Esophagus squamous epithelium (tissue), 5 donors: ENCODE measurements at regions of chr20 and their contacts with region 1.

Region 1: GRCh38 chr20:58890518-58891085 is 38.1 kb downstream of the GNAS start:
- DNase-seq: no peak
- H3K4me3 ChIP-seq: peak overlapping the region; percentile 83 to 97 (median 88)
- H3K27ac ChIP-seq: peak overlapping the region; percentile 86 to 99 (median 99)
- H3K4me1 ChIP-seq: peaks cover 20 to 42% (median 30%) of the 10 kb centered on the region in 3 donors
- H3K27me3 ChIP-seq: no peaks in the 10 kb centered on the region
- CTCF ChIP-seq: no peak
- POLR2A ChIP-seq: peak in 2 of 4 donors; percentile 39 to 50

Region 2: GRCh38 chr20:59032023-59032712 is 141.6 kb after region 1 on chr20 and contains the start of gene ATP5F1E:
- intact Hi-C with region 1: loop called (anchors 10 kb)
- DNase-seq: peak; percentile 77
- H3K4me3 ChIP-seq: peak within 1 kb of the TSS; percentile 49 to 83 (median 73)
- H3K27ac ChIP-seq: peak within 1 kb of the TSS; percentile 84 to 92 (median 90)
- H3K4me1 ChIP-seq: peaks cover 20 to 55% (median 30%) of the 10 kb centered on the region in 3 donors
- H3K27me3 ChIP-seq: no peaks in the 10 kb centered on the region
- CTCF ChIP-seq: peak in 1 of 6 experiments; percentile 11
- POLR2A ChIP-seq: peak in 3 of 4 donors; percentile 83 to 94 (median 93)
- total RNA-seq, gene ATP5F1E: 11.6 to 35.5 (median 26.0) TPM

Region 3: GRCh38 chr20:59392736-59393135 is 502.1 kb after region 1 on chr20:
- intact Hi-C with region 1: no loop called
- DNase-seq: no peak
- H3K4me3 ChIP-seq: no peak overlapping the region
- H3K27ac ChIP-seq: no peak overlapping the region
- H3K4me1 ChIP-seq: peaks cover 0 to 37% (median 0%) of the 10 kb centered on the region in 3 donors
- H3K27me3 ChIP-seq: peaks cover 0 to 55% (median 0%) of the 10 kb centered on the region in 4 donors
- CTCF ChIP-seq: no peak
- POLR2A ChIP-seq: no peak